ENCODE measurements at regions of chr10 and their contacts with region 1.

Region 1: GRCh38 chr10:114893251-114893650 is 44.7 kb upstream of the TRUB1 start:
- DNase-seq: no peak
- ATAC-seq: no peak
- H3K4me3 ChIP-seq: no peak overlapping the region
- H3K4me3 Mint-ChIP-seq: no peak overlapping the region
- H3K27ac ChIP-seq: no peak overlapping the region
- H3K27ac Mint-ChIP-seq: no peak overlapping the region
- H3K4me1 ChIP-seq: no peaks in the 10 kb centered on the region
- H3K4me1 Mint-ChIP-seq: no peaks in the 10 kb centered on the region
- H3K27me3 ChIP-seq: no peaks in the 10 kb centered on the region
- H3K27me3 Mint-ChIP-seq: peaks cover 0 to 13% (median 5%) of the 10 kb centered on the region in 5 donors

Region 2: GRCh38 chr10:114810926-114811325 is 82.3 kb before region 1 on chr10:
- CTCF ChIA-PET with region 1: no interaction called
- POLR2A ChIA-PET with region 1: no interaction called
- intact Hi-C with region 1: no loop called
- DNase-seq: no peak
- ATAC-seq: no peak
- H3K4me3 ChIP-seq: no peak overlapping the region
- H3K4me3 Mint-ChIP-seq: peak overlapping the region in 1 of 10 donors; percentile 60
- H3K27ac ChIP-seq: no peak overlapping the region
- H3K27ac Mint-ChIP-seq: peak overlapping the region in 3 of 9 donors; percentile 37 to 91 (median 58)
- H3K4me1 ChIP-seq: peaks cover 0 to 18% of the 10 kb centered on the region in 2 donors
- H3K4me1 Mint-ChIP-seq: peaks cover 0 to 31% (median 8%) of the 10 kb centered on the region in 7 donors
- H3K27me3 ChIP-seq: no peaks in the 10 kb centered on the region
- H3K27me3 Mint-ChIP-seq: peaks cover 0 to 7% (median 0%) of the 10 kb centered on the region in 5 donors

Region 3: DNA sequence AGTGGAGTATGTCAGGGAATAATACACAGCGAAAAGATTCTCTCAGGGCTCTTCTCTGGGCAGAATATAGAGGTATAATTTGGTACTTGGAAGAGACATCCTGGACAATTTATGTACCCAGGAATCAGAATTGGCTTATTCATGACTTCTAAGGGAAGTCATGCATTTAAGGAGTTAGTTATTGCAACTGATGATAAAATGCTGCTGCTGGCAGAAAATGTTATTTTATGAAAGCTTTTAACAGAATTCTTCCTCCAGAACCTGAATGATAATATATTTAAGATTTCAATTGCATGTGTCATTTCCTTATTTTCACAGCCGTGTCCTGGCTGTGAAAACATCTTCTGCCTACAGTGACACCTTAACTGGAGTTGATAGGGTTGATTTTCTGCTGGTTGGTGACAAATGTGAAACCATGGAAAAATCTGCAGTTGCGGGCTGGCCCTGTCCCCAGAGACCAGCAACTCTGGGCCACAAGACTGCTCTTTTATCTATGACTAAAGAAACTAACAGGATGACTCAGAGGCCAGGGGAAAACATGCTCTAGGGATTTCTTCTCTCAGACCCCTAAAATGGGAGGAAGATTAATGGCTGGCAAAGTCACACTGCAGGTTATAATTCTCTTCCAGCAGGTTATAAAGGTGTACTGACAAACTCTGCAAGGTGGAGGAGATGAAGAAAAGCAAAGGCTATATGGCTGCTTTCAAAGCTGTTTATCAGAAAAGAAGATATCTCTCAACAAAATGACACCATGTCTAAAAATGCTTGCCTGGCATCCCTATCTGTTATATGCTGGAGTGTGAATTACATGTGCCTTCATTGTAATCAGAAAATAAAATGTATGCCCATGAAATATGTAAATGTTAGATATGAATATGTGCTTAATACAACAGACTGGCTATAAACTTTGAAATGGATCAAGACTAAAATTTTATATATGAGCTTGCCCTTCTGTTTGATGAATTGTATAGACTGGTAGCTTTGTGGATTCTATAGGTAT is 32.6 kb after region 1 on chr10:
- CTCF ChIA-PET with region 1: no interaction called
- POLR2A ChIA-PET with region 1: no interaction called
- intact Hi-C with region 1: no loop called
- DNase-seq: peak in 1 of 9 donors; percentile 40
- ATAC-seq: no peak
- H3K4me3 ChIP-seq: no peak overlapping the region
- H3K4me3 Mint-ChIP-seq: no peak overlapping the region
- H3K27ac ChIP-seq: no peak overlapping the region
- H3K27ac Mint-ChIP-seq: no peak overlapping the region
- H3K4me1 ChIP-seq: no peaks in the 10 kb centered on the region
- H3K4me1 Mint-ChIP-seq: peaks cover 0 to 9% (median 0%) of the 10 kb centered on the region in 7 donors
- H3K27me3 ChIP-seq: no peaks in the 10 kb centered on the region
- H3K27me3 Mint-ChIP-seq: peaks cover 2 to 33% (median 27%) of the 10 kb centered on the region in 5 donors

Region 4: GRCh38 chr10:114987995-114988394 is 94.7 kb after region 1 on chr10:
- CTCF ChIA-PET with region 1: no interaction called
- POLR2A ChIA-PET with region 1: no interaction called
- intact Hi-C with region 1: loop called in 1 of 2 experiments (anchors 10 kb)
- DNase-seq: no peak
- ATAC-seq: no peak
- H3K4me3 ChIP-seq: no peak overlapping the region
- H3K4me3 Mint-ChIP-seq: no peak overlapping the region
- H3K27ac ChIP-seq: no peak overlapping the region
- H3K27ac Mint-ChIP-seq: no peak overlapping the region
- H3K4me1 ChIP-seq: no peaks in the 10 kb centered on the region
- H3K4me1 Mint-ChIP-seq: no peaks in the 10 kb centered on the region
- H3K27me3 ChIP-seq: no peaks in the 10 kb centered on the region
- H3K27me3 Mint-ChIP-seq: no peaks in the 10 kb centered on the region